T-cell (primary cell): ENCODE measurements at regions of chr14 and their contacts with region 1.

Region 1: GRCh38 chr14:30521899-30522736 is 36.8 kb upstream of the G2E3 start:
- DNase-seq: peak in 1 of 35 experiments; percentile 67
- ATAC-seq: peak; percentile 42 to 58 (median 54)
- H3K4me3 ChIP-seq: no peak overlapping the region
- H3K4me3 Mint-ChIP-seq: peak overlapping the region in 1 of 3 donors; percentile 11
- H3K27ac ChIP-seq: no peak overlapping the region
- H3K27ac Mint-ChIP-seq: peak overlapping the region in 1 of 2 donors; percentile 35
- H3K4me1 ChIP-seq: peaks cover 0 to 5% of the 10 kb centered on the region in 2 experiments
- H3K4me1 Mint-ChIP-seq: peaks cover 9 to 14% (median 13%) of the 10 kb centered on the region in 3 donors
- H3K27me3 ChIP-seq: no peaks in the 10 kb centered on the region
- H3K27me3 Mint-ChIP-seq: no peaks in the 10 kb centered on the region

Region 2: GRCh38 chr14:30375296-30375892 is 146.7 kb before region 1 on chr14:
- CTCF ChIA-PET with region 1: interaction called, 3 to 10 read pairs
- POLR2A ChIA-PET with region 1: no interaction called
- DNase-seq: peak; percentile 6 to 64 (median 42)
- ATAC-seq: peak; percentile 59 to 73 (median 62)
- H3K4me3 ChIP-seq: no peak overlapping the region
- H3K4me3 Mint-ChIP-seq: no peak overlapping the region
- H3K27ac ChIP-seq: no peak overlapping the region
- H3K27ac Mint-ChIP-seq: no peak overlapping the region
- H3K4me1 ChIP-seq: no peaks in the 10 kb centered on the region
- H3K4me1 Mint-ChIP-seq: no peaks in the 10 kb centered on the region
- H3K27me3 ChIP-seq: peaks cover 0 to 4% of the 10 kb centered on the region in 2 experiments
- H3K27me3 Mint-ChIP-seq: peaks cover 11 to 15% of the 10 kb centered on the region in 2 donors